OCI-LY7 (cell line): ENCODE measurements at regions of chr7 and their contacts with region 1.

Region 1: DNA sequence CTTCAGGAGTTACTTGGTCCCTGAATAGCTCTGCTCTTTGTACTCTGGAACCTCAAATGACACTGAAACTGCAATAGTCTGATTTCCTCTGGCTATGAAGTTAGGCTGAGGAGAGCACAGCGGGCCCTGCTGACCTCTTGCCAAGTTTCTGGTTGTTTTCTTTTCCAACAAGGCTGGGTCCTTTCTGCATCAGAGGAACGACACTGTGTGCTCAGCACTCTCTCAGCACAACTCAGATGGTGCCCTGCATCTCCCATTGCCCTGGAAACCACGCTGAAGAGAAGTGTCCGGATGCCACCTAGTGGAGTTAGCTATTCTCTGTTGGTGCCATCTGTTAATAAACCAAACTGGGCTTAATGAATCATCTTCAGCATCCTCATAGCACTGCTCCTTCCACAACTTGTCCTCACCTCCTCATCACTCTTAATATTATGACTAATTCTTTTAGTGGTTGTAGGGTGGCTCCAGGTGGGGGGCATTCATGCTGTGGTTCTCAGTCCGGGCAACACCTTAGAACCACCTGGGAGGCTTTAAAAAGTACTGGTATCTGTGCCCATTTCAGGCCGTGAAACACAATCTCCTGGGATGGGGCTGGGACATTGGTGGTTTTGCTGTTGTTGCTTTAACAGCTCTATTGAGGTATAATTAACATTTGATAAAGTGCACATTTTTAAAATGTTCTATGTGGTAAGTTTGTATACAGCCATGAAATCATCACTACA is 8.2 kb upstream of the EFCAB10 start:
- DNase-seq: peak; percentile 78
- H3K4me3 ChIP-seq: no peak overlapping the region
- H3K27ac ChIP-seq: no peak overlapping the region
- H3K4me1 ChIP-seq: peaks cover 6% of the 10 kb centered on the region
- CTCF ChIP-seq: peak; percentile 90

Region 2: DNA sequence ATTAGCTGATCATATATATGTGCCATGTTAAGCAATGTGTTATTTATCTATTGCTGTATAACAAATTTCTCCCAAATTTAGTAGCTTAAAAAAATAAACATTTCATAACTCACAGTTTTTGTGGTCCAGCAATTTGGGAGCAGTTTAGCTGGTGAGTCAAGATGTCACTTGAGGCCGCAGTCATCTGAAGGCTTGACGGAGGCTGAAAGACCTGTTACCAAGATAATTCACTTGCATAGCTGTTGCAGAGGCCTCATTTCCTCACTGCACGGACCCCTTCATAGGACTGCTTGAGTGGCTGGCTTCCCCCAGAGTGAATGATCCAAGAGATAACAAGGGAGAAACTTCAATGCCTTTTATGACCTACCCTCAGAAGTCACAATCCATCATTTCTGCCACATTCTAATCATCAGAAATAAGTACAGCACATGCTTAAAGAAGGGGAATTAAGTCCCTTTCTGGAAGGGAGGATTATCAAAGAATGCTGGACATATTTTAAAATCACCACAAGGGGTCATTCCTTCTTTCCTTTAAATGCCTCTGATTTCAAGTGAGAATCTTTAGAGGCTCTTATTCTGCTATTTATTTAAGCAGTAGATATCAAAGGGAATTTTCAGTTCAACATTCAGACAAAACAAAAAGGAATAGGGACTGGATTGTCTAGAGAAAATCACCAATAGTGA is 190.3 kb before region 1 on chr7:
- CTCF ChIA-PET with region 1: interaction called, 3 read pairs
- POLR2A ChIA-PET with region 1: no interaction called
- intact Hi-C with region 1: loop called (anchors 10 kb)
- DNase-seq: peak; percentile 16
- H3K4me3 ChIP-seq: no peak overlapping the region
- H3K27ac ChIP-seq: no peak overlapping the region
- H3K4me1 ChIP-seq: no peaks in the 10 kb centered on the region
- CTCF ChIP-seq: peak; percentile 62